ENCODE measurements at regions of chr13 and their contacts with region 1.

Region 1: DNA sequence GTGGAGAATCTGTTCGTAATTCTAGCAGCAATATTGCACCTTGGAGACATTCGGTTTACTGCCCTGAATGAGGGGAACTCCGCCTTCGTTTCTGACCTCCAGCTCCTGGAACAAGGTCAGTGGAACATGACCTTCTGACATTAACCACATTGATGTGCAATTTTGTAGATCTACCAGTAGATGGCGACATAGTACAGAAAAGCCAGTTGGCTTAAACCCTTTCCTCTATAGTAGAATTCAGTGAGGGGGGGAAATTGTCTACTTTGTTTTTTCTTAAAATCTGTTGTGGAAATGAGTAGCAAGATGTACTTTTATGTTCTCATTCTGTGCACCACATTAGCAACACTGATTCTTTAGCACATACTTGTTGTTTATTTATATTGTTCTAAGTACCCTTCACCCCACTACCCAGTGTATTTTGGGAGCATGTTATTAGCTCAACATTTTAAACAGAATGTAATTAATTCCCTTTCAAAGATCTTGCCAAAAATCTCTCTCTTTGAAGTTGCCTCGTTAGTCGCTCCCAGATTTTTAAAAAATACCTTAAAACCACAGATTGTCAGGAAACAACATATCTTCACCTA is 332.2 kb downstream of the MYO16 start:
- DNase-seq: peak; percentile 83
- H3K4me3 ChIP-seq: no peak overlapping the region
- H3K27ac ChIP-seq: peak overlapping the region; percentile 61
- H3K4me1 ChIP-seq: peaks cover 55% of the 10 kb centered on the region
- H3K27me3 ChIP-seq: no peaks in the 10 kb centered on the region
- CTCF ChIP-seq: peak; percentile 83

Region 2: DNA sequence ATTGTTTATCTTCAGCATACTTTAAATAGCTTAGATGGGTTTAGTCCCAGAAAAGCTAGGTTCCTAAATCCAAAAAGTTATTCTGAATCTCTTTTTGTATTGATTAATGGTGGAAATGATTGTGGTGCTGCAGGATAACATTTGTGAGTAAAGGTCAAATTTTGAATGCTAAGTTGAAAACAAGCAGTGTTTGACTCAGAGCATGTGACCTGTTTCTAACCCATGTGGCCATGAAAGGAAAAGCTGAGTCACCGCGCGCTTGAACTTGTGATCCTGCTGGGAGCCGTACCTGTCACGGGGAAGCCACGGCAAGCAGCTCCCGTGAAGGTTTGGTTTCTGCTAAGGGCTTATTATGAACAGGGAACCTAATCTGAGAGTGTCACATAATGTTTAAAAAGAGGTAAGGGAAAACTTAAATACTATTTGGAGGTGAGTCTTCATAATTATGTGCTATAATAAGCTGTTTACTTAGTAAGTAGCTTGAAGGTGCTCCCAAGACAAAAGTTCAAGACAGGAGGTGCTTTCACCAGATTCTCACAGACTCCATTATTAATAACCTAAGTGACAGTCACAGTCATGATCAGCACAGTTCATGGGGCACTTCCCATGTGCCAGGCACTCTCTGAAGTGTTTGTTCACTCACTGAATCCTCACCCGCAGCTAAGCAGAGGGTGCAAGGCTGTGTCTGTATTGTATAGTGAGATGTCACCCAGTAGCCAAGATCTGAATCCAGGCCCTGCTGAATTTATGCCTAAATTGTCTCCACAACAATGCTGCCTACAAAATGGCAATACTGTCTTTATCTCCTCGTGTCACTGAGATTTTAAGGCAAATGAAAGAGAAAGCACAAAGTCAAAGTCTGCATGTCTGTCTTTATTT is 45.8 kb before region 1 on chr13:
- CTCF ChIA-PET with region 1: interaction called, 3 read pairs
- POLR2A ChIA-PET with region 1: no interaction called
- intact Hi-C with region 1: loop called (anchors 2 kb)
- DNase-seq: peak; percentile 62
- H3K4me3 ChIP-seq: peak overlapping the region; percentile 4
- H3K27ac ChIP-seq: peak overlapping the region; percentile 61
- H3K4me1 ChIP-seq: peaks cover 36% of the 10 kb centered on the region
- H3K27me3 ChIP-seq: no peaks in the 10 kb centered on the region
- CTCF ChIP-seq: no peak

Region 3: GRCh38 chr13:109412283-109412901 is 450.8 kb after region 1 on chr13:
- CTCF ChIA-PET with region 1: no interaction called
- POLR2A ChIA-PET with region 1: no interaction called
- intact Hi-C with region 1: loop called (anchors 5 kb)
- DNase-seq: peak; percentile 93
- H3K4me3 ChIP-seq: peak overlapping the region; percentile 15
- H3K27ac ChIP-seq: peak overlapping the region; percentile 81
- H3K4me1 ChIP-seq: peaks cover 53% of the 10 kb centered on the region
- H3K27me3 ChIP-seq: no peaks in the 10 kb centered on the region
- CTCF ChIP-seq: no peak

Region 4: DNA sequence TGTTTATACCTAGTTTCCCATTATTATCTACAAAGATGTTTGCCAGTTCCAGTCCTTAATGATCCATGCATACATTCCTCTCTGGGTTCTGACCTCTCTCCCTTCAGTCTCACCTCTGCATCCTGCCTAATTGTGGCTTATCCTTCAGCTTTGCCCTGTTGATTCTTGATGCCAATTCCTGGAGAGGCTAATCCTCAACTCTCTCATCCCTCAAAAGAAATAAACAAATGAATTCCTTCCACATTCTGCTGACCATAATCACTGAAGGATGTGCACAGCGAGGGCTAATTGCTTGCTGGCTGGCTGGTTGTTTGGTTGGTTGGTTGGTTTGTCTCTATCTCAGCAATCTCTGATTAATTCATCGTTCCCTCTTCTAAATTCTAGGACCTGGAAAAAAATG is 710.9 kb after region 1 on chr13:
- CTCF ChIA-PET with region 1: no interaction called
- POLR2A ChIA-PET with region 1: no interaction called
- intact Hi-C with region 1: no loop called
- DNase-seq: peak; percentile 33
- H3K4me3 ChIP-seq: no peak overlapping the region
- H3K27ac ChIP-seq: no peak overlapping the region
- H3K4me1 ChIP-seq: peaks cover 24% of the 10 kb centered on the region
- H3K27me3 ChIP-seq: no peaks in the 10 kb centered on the region
- CTCF ChIP-seq: no peak

Region 5: DNA sequence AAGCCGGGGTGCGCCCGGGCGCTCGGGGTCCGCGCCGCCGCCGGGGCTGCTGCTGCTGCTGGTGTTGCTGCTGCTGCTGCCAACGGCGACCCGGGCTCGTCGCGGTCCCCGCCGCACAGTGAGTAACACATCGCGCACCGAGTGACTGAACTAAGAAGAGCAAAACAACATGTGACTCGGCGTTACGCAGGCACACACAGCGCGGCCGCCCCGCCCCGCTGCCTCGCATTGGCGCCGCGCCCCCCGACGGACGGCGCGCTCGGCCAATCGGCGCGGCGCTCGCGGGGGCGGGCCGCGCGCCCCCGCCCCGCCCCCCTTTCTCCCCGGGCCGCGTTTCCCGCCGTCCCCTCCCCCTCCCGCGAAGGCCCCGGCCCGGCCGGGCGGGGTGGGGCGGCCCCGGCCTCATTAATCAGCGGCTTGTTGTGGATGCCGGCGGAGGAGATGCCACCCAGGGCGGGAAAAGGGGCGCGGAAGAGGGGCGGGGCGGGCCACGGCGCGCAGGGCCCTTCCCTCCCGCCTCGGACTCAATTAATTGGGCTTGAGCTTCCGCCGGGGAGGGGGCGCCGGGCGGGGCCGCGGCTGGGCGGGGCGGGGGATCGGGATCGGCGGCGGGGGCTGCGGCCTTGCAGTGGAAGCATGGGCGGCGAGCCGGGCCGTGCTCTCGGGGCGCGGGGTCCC is 825.0 kb after region 1 on chr13 and contains the start of gene IRS2:
- CTCF ChIA-PET with region 1: interaction called, 3 read pairs
- POLR2A ChIA-PET with region 1: no interaction called
- intact Hi-C with region 1: loop called (anchors 2 kb)
- DNase-seq: peak; percentile 97
- H3K4me3 ChIP-seq: peak within 1 kb of the TSS; percentile 84
- H3K27ac ChIP-seq: peak within 1 kb of the TSS; percentile 94
- H3K4me1 ChIP-seq: peaks cover 32% of the 10 kb centered on the region
- H3K27me3 ChIP-seq: no peaks in the 10 kb centered on the region
- CTCF ChIP-seq: no peak
- total RNA-seq, gene IRS2: 135 TPM in 2 replicates

Region 6: DNA sequence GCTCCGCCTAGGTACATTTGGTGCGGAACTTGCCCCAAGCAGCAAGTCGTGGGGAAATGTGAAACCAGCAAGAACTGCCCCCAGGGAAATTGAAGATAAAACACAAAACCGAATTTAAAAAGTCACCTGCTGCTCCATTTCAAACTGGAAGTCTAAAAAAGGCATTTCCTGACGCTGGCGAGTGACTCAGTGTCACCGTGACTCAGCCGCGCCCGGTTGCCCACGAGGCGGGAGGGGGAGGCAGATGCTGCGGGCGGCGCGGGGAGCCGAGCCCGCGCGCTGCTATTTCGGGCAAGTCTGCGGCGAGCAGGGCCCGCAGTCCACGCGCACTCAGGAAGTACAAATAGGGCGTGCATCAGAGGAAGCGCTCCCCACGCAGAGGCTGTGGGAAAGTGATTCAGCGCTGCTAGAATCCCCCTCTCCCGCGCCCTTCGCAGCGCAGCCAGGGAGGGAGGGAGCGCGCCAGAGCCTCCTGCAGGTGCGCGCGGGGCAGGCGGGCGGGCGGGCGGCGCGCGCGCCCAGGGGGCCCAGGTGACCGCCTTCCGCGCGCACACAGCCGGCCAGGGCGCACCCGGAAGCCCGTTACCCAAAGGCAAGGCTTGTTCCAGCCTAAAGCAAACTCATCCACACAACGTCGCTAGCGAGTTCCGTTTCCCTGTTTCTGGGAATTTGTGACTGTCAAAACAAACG is 1176.5 kb after region 1 on chr13:
- CTCF ChIA-PET with region 1: no interaction called
- POLR2A ChIA-PET with region 1: no interaction called
- intact Hi-C with region 1: loop called (anchors 5 kb)
- DNase-seq: peak; percentile 56
- H3K4me3 ChIP-seq: peak overlapping the region; percentile 58
- H3K27ac ChIP-seq: no peak overlapping the region
- H3K4me1 ChIP-seq: peaks cover 13% of the 10 kb centered on the region
- H3K27me3 ChIP-seq: no peaks in the 10 kb centered on the region
- CTCF ChIP-seq: no peak; the same call in 1 of the 2 replicates

Measured in A673 (cell line).